ENCODE measurements at regions of chr9 and their contacts with region 1.

Region 1: GRCh38 chr9:87991141-87991870 is 17.0 kb upstream of the CDK20 start:
- DNase-seq: no peak
- ATAC-seq: no peak
- H3K4me3 ChIP-seq: no peak overlapping the region
- H3K4me3 Mint-ChIP-seq: no peak overlapping the region
- H3K27ac ChIP-seq: no peak overlapping the region
- H3K27ac Mint-ChIP-seq: no peak overlapping the region
- H3K4me1 ChIP-seq: no peaks in the 10 kb centered on the region
- H3K4me1 Mint-ChIP-seq: no peaks in the 10 kb centered on the region
- H3K27me3 ChIP-seq: peaks cover 0 to 10% of the 10 kb centered on the region in 2 experiments
- H3K27me3 Mint-ChIP-seq: peaks cover 24% of the 10 kb centered on the region in 2 donors

Region 2: GRCh38 chr9:87592554-87593358 is 398.6 kb before region 1 on chr9:
- CTCF ChIA-PET with region 1: no interaction called
- POLR2A ChIA-PET with region 1: no interaction called
- DNase-seq: no peak
- ATAC-seq: no peak
- H3K4me3 ChIP-seq: no peak overlapping the region
- H3K4me3 Mint-ChIP-seq: no peak overlapping the region
- H3K27ac ChIP-seq: no peak overlapping the region
- H3K27ac Mint-ChIP-seq: no peak overlapping the region
- H3K4me1 ChIP-seq: peaks cover 0 to 5% of the 10 kb centered on the region in 2 experiments
- H3K4me1 Mint-ChIP-seq: no peaks in the 10 kb centered on the region
- H3K27me3 ChIP-seq: peaks cover 0 to 6% of the 10 kb centered on the region in 2 experiments
- H3K27me3 Mint-ChIP-seq: no peaks in the 10 kb centered on the region

Region 3: GRCh38 chr9:87973730-87974292 is 17.5 kb before region 1 on chr9:
- CTCF ChIA-PET with region 1: interaction called in 1 of 2 experiments, 13 read pairs
- POLR2A ChIA-PET with region 1: no interaction called
- DNase-seq: peak in 2 of 35 experiments; percentile 2 to 7
- ATAC-seq: no peak
- H3K4me3 ChIP-seq: peak overlapping the region; percentile 69 to 87
- H3K4me3 Mint-ChIP-seq: peak overlapping the region; percentile 91 to 94 (median 92)
- H3K27ac ChIP-seq: peak overlapping the region; percentile 74
- H3K27ac Mint-ChIP-seq: peak overlapping the region; percentile 82 to 97
- H3K4me1 ChIP-seq: peaks cover 2 to 22% of the 10 kb centered on the region in 2 experiments
- H3K4me1 Mint-ChIP-seq: peaks cover 29 to 36% (median 29%) of the 10 kb centered on the region in 3 donors
- H3K27me3 ChIP-seq: no peaks in the 10 kb centered on the region
- H3K27me3 Mint-ChIP-seq: no peaks in the 10 kb centered on the region

Measured in T-cell (primary cell).